ENCODE measurements at regions of chr4 and their contacts with region 1.

Region 1: GRCh38 chr4:147590249-147590920 is 26.8 kb upstream of the TMEM184C start:
- DNase-seq: peak; percentile 56
- ATAC-seq: peak; percentile 58

Region 2: DNA sequence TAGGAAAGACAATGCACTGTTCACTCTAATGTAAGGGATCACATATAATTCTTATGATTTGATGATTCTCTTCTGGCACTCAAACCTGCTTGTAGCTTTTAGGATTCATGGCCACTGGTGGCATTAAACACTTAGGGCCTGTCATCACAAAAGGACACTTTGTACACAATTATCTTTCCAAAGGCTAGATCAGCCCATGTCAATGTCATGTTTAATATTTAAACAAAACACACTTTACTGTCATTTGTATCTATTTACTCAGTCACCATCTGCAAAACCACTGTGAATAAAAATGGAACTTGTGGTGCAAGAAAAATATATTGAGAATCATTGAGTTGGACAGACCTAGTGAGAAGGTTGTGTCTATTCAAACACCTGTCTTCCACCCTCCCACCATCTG is 561.1 kb before region 1 on chr4:
- intact Hi-C with region 1: loop called (anchors 10 kb)
- DNase-seq: no peak
- ATAC-seq: no peak

Region 3: GRCh38 chr4:147111033-147111367 is 479.4 kb before region 1 on chr4:
- intact Hi-C with region 1: loop called (anchors 5 kb)
- DNase-seq: no peak
- ATAC-seq: no peak

Region 4: GRCh38 chr4:147160908-147161513 is 429.4 kb before region 1 on chr4:
- intact Hi-C with region 1: loop called (anchors 2 kb)
- DNase-seq: no peak
- ATAC-seq: peak; percentile 69